Common myeloid progenitor, CD34-positive (primary cell): ENCODE measurements at regions of chr5 and their contacts with region 1.

Region 1: DNA sequence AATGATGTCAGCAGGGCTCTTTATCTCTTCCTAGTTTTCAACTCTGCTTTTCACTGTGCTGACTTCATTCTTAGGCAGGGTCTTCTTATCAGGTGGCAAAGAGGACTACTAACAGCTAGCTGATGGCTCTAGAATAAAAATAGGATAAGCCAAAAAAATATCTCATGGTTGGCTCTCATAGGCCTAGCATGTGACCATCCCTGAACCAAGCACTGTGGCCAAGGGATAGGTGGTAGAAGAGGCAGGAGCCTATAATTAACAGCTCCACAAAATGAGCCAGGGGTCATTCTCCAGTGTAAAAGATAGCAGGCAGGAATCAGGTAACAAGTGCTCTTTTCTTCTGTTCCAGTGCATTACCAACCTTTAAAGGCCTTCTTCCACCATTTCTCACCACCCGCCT is 21.1 kb downstream of the ANKDD1B start:
- DNase-seq: no peak
- H3K4me3 ChIP-seq: no peak overlapping the region
- H3K27ac ChIP-seq: no peak overlapping the region
- H3K4me1 ChIP-seq: peaks cover 0 to 11% (median 3%) of the 10 kb centered on the region in 4 experiments
- H3K27me3 ChIP-seq: no peaks in the 10 kb centered on the region

Region 2: DNA sequence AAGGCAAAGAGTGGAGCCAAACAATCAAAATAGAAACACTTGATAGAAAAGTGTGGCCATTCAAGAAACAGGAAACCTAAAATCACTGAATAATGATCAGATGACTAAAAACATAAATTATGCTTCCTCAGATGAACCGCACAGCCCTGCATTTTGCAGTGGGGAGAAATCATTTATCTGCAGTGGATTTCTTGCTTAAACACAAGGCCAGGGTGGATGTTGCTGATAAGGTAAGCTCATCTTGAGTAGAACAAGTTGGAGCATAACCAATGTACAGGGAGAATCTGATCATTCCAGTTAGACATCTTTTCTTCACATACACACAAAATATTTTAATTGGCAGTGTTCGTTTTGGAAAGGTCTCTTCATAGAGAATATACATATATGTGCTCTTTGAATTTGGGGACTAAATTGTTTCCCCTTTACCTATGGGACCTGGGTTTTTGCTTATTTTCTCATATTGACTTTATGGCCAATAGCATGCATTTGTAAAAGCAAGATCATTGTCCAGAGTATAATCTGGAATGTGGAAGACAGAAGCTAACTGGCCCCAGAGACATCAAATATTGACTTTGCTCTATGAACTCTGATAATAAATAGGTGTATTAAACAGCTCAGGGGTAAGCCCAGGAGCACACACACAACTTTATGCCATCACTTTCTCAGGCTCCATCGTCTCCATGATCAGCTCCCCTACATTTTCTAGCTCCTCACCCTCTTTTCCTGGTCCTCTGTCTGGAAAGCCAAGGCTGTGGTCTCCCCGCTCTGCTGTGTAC is 11.9 kb before region 1 on chr5:
- CTCF ChIA-PET with region 1: interaction called, 10 read pairs
- POLR2A ChIA-PET with region 1: no interaction called
- DNase-seq: peak; percentile 37 to 85 (median 74)
- H3K4me3 ChIP-seq: no peak overlapping the region
- H3K27ac ChIP-seq: no peak overlapping the region
- H3K4me1 ChIP-seq: peaks cover 0 to 18% (median 14%) of the 10 kb centered on the region in 4 experiments
- H3K27me3 ChIP-seq: peaks cover 0 to 6% (median 0%) of the 10 kb centered on the region in 5 experiments